CD4-positive, alpha-beta memory T cell (primary cell): ENCODE measurements at regions of chr3 and their contacts with region 1.

Region 1: GRCh38 chr3:48739955-48740823 is 23.2 kb upstream of the IP6K2 start:
- DNase-seq: peak; percentile 25 to 43 (median 37)
- H3K4me3 ChIP-seq: no peak overlapping the region
- H3K4me3 Mint-ChIP-seq: no peak overlapping the region
- H3K27ac ChIP-seq: no peak overlapping the region
- H3K27ac Mint-ChIP-seq: peak overlapping the region in 1 of 7 donors; percentile 23
- H3K4me1 ChIP-seq: no peaks in the 10 kb centered on the region
- H3K4me1 Mint-ChIP-seq: peaks cover 0 to 10% (median 2%) of the 10 kb centered on the region in 4 donors
- H3K27me3 ChIP-seq: no peaks in the 10 kb centered on the region
- H3K27me3 Mint-ChIP-seq: no peaks in the 10 kb centered on the region

Region 2: GRCh38 chr3:48952510-48953118 is 212.4 kb after region 1 on chr3:
- CTCF ChIA-PET with region 1: interaction called, 40 read pairs
- POLR2A ChIA-PET with region 1: interaction called, 3 read pairs
- intact Hi-C with region 1: no loop called
- DNase-seq: peak; percentile 41 to 58 (median 51)
- H3K4me3 ChIP-seq: no peak overlapping the region
- H3K4me3 Mint-ChIP-seq: no peak overlapping the region
- H3K27ac ChIP-seq: no peak overlapping the region
- H3K27ac Mint-ChIP-seq: peak overlapping the region in 4 of 7 donors; percentile 17 to 78 (median 43)
- H3K4me1 ChIP-seq: peaks cover 6% of the 10 kb centered on the region
- H3K4me1 Mint-ChIP-seq: peaks cover 9 to 18% (median 10%) of the 10 kb centered on the region in 4 donors
- H3K27me3 ChIP-seq: no peaks in the 10 kb centered on the region
- H3K27me3 Mint-ChIP-seq: no peaks in the 10 kb centered on the region